WTC11 (cell line): ENCODE measurements at regions of chr5 and their contacts with region 1.

Region 1: DNA sequence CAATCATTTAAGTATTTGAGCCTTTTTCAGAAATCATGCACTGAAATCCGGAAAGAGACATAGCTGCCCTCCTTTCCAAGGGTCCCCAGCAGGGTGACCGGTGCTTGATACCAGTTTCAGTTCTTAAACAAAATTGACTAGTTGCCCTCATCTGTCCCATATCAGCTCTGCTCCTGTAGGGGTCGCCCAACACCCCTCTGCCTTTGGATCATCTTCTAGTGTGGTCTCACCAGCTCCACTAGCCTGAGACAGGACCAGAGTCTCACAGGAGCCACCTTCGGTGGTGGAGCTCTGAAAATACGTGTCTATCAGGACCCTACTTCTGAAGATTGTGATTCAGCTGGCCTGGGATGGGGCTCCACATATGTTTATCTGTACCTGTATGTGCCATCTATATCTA is 428.2 kb downstream of the ENC1 start:
- DNase-seq: peak; percentile 67
- ATAC-seq: peak; percentile 99
- H3K4me3 Mint-ChIP-seq: no peak overlapping the region
- H3K27ac Mint-ChIP-seq: no peak overlapping the region
- H3K4me1 Mint-ChIP-seq: peaks cover 8% of the 10 kb centered on the region
- H3K27me3 Mint-ChIP-seq: no peaks in the 10 kb centered on the region
- CTCF ChIP-seq: peak; percentile 20; the same call in 1 of the 2 replicates

Region 2: DNA sequence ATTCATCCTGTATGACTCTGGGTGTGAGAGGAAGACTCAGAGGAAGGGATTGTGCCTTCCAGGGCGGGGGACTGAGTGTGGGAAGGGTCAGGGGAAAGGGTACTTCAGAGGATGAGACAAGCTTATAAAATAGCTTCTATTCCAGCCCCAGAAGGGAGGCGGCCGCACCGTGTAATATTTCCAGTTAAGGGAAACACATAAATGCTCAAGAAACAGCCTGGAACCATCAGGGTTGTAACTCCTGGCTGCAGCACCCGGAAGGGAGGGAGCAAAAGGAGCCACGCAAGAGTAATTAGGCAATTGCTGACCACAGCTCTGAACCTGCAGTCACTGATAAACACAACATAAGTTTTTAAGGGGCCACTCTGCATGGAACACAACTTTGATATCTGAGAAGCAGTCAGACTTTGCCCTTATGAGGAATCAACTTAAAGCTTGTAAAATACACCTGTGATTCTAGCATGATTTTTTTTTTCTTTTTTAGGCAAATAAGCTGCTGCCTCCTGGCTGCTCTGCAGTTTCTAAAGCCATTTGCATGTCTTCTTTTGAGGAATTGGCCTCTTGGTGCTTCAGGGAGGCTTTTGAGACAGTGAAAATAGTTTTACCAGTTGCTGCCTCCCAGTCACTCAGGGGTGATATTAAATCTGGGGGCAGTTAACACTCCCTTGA is 45.4 kb after region 1 on chr5:
- CTCF ChIA-PET with region 1: interaction called, 10 read pairs
- POLR2A ChIA-PET with region 1: no interaction called
- DNase-seq: no peak
- ATAC-seq: peak; percentile 80
- H3K4me3 Mint-ChIP-seq: peak overlapping the region; percentile 1
- H3K27ac Mint-ChIP-seq: peak overlapping the region; percentile 46
- H3K4me1 Mint-ChIP-seq: peaks cover 44% of the 10 kb centered on the region
- H3K27me3 Mint-ChIP-seq: no peaks in the 10 kb centered on the region
- CTCF ChIP-seq: no peak